Activated CD4-positive, alpha-beta memory T cell treated with anti-CD3 and anti-CD28 coated beads, Interleukin-2, amount 10 ng/mL, durations not matched to agents 7 days and 5 days (primary cell): ENCODE measurements at regions of chr17 and their contacts with region 1.

Region 1: DNA sequence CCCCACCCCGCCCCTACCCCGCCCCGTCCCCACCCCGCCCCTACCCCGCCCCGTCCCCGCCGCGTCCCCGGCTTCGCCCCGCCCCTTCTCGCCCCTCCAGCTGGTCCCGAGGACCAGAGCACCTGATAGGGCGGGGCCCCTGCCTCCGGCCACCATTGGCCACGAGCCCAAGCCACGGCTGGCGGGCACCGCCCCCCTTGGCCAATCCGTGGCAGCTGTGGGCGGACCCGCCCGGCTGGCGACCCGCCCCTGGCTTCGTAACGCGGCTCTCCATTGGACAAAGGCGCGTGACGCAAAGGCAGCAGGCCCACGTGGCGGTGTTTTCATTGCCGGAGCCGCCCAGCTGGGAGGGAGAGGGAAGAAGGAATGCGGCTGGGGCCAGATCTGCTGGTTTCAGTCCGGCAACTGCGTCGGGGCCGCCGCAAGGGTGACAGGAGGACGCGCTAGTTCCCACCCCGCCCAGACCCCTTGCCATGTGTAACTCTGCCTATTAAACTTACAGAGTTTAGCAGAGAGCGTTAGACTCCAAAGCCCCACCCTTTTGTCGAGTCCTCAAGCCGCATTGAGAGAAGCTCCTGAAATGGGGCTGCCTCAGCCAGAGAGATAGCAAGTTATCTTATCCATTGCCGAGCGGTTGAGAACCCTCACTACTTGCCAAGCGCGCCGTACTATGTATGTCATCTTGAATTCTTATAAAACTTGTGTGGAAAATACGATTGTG is 403 bp upstream of the WIPI1 start:
- DNase-seq: peak; percentile 99
- H3K4me3 Mint-ChIP-seq: peak overlapping the region; percentile 74
- H3K27ac Mint-ChIP-seq: peak overlapping the region; percentile 98
- H3K4me1 Mint-ChIP-seq: peaks cover 85% of the 10 kb centered on the region
- H3K27me3 Mint-ChIP-seq: no peaks in the 10 kb centered on the region

Region 2: DNA sequence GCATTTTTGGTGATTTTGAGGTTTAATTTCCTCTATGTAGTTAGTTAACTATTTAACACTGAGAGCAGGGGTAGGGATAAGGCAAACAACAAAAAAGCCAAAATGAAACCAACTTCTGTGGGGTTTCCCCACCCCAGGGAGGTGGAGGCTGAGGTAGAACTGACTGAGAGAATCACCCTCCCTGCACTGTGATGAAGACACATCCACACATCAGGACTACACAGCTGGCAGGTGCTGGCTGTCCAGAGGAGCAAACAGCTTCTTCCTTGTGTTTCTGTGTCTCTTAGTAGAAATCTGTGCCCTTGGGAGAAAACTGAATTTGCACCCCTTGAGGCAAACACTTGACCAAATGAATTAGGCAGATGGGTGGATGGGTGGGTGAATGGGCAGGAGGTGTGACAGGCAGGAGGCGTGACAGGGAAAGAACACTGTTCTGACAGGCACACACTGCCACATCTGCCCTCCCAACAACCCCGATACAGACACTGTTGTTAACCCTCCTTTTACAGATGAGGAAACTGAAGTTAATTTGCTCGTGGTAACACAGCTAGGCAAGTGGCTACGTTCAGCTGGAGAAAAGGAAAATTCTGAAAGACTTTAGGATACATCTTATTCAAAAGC is 272.8 kb before region 1 on chr17:
- CTCF ChIA-PET with region 1: interaction called, 26 read pairs
- POLR2A ChIA-PET with region 1: interaction called, 45 read pairs
- DNase-seq: peak; percentile 73
- H3K4me3 Mint-ChIP-seq: peak overlapping the region; percentile 43
- H3K27ac Mint-ChIP-seq: peak overlapping the region; percentile 80
- H3K4me1 Mint-ChIP-seq: peaks cover 57% of the 10 kb centered on the region
- H3K27me3 Mint-ChIP-seq: no peaks in the 10 kb centered on the region

Region 3: DNA sequence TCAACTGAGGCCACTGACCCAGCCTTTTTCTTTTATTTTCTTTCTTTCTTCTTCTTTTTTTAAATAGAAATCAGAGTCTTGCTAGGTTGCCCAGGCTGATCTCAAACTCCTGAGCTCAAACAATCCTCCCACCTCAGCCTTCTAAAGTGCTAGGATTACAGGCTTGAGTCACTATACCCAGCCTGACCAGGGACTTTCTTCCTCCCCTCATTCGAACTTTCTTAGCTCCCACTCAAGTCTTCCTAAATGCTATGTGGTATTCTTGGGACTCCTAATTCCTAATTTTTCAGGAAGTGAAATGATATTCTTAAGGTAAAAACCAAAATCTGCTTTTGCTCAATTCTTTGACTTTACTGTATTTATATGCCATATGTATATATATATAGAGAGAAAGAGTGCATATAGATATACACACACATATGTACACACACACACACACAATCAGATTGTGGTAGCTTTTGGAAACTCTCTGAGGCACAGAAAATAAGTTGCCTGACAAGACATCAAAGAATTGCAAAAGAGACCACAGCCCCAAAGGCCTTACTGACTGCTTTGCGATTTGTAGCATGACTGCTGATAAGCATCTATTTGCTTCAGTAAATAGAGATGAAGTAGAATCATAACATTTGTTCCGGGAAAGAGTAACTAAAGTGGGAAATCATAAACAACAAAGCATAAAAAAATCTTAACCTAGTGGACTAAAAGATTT is 219.4 kb before region 1 on chr17:
- CTCF ChIA-PET with region 1: interaction called, 6 read pairs
- POLR2A ChIA-PET with region 1: interaction called, 10 read pairs
- DNase-seq: no peak
- H3K4me3 Mint-ChIP-seq: peak overlapping the region; percentile 70
- H3K27ac Mint-ChIP-seq: peak overlapping the region; percentile 97
- H3K4me1 Mint-ChIP-seq: peaks cover 63% of the 10 kb centered on the region
- H3K27me3 Mint-ChIP-seq: no peaks in the 10 kb centered on the region

Region 4: GRCh38 chr17:68255731-68256538 is 201.8 kb before region 1 on chr17:
- CTCF ChIA-PET with region 1: interaction called, 3 read pairs
- POLR2A ChIA-PET with region 1: interaction called, 18 read pairs
- DNase-seq: no peak
- H3K4me3 Mint-ChIP-seq: peak overlapping the region; percentile 39
- H3K27ac Mint-ChIP-seq: peak overlapping the region; percentile 82
- H3K4me1 Mint-ChIP-seq: peaks cover 82% of the 10 kb centered on the region
- H3K27me3 Mint-ChIP-seq: no peaks in the 10 kb centered on the region

Region 5: DNA sequence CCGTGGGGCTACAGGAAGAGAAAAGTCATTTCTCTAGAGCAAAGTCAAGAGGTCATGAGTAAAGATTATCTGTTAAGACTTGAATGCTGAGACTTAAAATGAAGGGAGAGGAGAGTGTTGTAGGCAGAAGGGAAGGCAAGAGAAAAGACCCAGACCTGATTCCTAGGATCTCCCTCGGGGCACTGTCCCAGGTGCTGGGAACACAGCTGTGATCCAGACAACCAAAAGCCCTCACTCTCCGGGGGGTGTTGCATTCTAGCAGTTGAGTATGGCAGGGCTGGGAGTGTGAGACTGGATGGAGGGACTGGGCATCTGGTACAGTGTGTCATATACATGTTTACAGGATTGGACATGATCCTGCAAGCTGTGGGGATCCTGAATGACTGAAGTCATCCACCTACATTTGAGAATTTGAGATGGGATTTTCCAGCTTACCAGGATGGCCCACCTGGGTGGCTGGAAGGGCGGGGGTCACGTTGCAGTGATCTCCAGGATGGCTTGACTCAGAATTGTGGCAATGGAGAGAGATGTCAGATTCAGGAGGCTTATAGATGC is 137.3 kb before region 1 on chr17:
- CTCF ChIA-PET with region 1: no interaction called
- POLR2A ChIA-PET with region 1: no interaction called
- DNase-seq: no peak
- H3K4me3 Mint-ChIP-seq: no peak overlapping the region
- H3K27ac Mint-ChIP-seq: no peak overlapping the region
- H3K4me1 Mint-ChIP-seq: peaks cover 34% of the 10 kb centered on the region
- H3K27me3 Mint-ChIP-seq: no peaks in the 10 kb centered on the region

Region 6: GRCh38 chr17:68346448-68346847 is 111.3 kb before region 1 on chr17:
- CTCF ChIA-PET with region 1: interaction called, 3 read pairs
- POLR2A ChIA-PET with region 1: interaction called, 27 read pairs
- DNase-seq: peak; percentile 88
- H3K4me3 Mint-ChIP-seq: peak overlapping the region; percentile 67
- H3K27ac Mint-ChIP-seq: peak overlapping the region; percentile 96
- H3K4me1 Mint-ChIP-seq: peaks cover 78% of the 10 kb centered on the region
- H3K27me3 Mint-ChIP-seq: no peaks in the 10 kb centered on the region

Region 7: DNA sequence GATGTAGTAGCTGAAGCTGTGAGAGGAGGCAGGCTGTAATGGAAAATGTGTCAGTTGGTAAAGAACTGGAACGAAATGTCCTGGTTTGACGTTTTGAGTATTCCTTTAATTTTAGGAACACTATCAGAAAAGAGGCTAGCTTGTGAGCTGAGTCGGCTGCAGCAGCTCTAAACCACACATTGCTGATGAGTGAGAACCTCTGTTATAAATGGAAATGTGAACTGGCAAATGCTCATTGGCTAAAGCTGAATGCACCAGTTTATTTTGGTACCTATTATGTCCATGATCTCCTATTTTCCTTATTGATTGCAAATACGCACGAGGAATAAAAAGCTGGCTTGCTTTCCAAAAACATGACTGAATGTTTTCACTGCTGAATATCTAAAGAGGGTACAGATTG is 10.6 kb after region 1 on chr17:
- CTCF ChIA-PET with region 1: interaction called, 14 read pairs
- POLR2A ChIA-PET with region 1: no interaction called
- DNase-seq: no peak
- H3K4me3 Mint-ChIP-seq: no peak overlapping the region
- H3K27ac Mint-ChIP-seq: no peak overlapping the region
- H3K4me1 Mint-ChIP-seq: peaks cover 11% of the 10 kb centered on the region
- H3K27me3 Mint-ChIP-seq: peaks cover 29% of the 10 kb centered on the region

Region 8: GRCh38 chr17:68646701-68647104 is 189.0 kb after region 1 on chr17:
- CTCF ChIA-PET with region 1: no interaction called
- POLR2A ChIA-PET with region 1: no interaction called
- DNase-seq: no peak
- H3K4me3 Mint-ChIP-seq: no peak overlapping the region
- H3K27ac Mint-ChIP-seq: no peak overlapping the region
- H3K4me1 Mint-ChIP-seq: no peaks in the 10 kb centered on the region
- H3K27me3 Mint-ChIP-seq: peaks cover 9% of the 10 kb centered on the region